PC-3 (cell line): ENCODE measurements at regions of chr7 and their contacts with region 1.

Region 1: DNA sequence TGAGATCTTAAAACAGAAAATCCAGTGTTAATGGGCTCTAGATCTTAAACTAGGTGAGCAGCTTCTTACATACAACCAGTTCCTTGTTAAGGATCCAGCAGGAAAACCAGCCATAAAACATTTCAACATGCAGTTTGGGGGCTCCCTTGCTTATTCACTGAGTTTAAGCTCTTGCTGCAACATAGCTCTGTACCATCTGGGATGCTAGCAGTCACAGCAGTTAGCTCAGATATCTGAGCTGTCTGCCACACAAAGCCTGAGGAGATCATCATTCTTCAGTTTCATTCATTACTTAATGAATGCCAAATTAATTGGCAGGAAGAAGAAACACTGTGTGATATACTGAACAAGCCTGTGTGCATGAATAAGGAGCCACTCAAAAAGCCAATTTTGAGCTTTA is 62.8 kb downstream of the PODXL start:
- DNase-seq: no peak
- ATAC-seq: no peak
- H3K4me3 ChIP-seq: no peak overlapping the region
- H3K27ac ChIP-seq: no peak overlapping the region
- H3K4me1 ChIP-seq: peaks cover 4% of the 10 kb centered on the region; the same call in 1 of the 2 replicates
- H3K27me3 ChIP-seq: no peaks in the 10 kb centered on the region
- CTCF ChIP-seq: no peak

Region 2: DNA sequence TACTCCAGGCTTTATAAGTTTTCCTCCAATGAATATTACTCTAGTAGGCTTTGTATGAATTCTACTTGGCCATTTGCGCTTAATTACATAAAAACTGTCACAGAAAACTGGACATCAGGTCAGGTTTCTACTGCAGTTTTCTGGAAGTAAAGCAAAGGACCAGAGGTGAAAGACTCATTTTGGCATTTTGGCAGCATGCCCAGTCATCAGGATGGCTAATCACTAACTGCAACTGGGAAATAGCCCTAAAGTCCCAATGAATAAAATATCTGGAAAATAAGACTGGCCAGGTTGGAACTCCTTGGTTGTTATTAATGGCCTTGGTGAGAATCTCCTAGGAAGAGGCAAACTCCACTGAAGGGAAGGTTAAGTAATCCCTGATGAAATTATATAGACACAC is 900.5 kb before region 1 on chr7:
- CTCF ChIA-PET with region 1: no interaction called
- POLR2A ChIA-PET with region 1: no interaction called
- intact Hi-C with region 1: no loop called
- DNase-seq: peak; percentile 4
- ATAC-seq: no peak
- H3K4me3 ChIP-seq: no peak overlapping the region
- H3K27ac ChIP-seq: no peak overlapping the region
- H3K4me1 ChIP-seq: no peaks in the 10 kb centered on the region
- H3K27me3 ChIP-seq: no peaks in the 10 kb centered on the region
- CTCF ChIP-seq: no peak

Region 3: DNA sequence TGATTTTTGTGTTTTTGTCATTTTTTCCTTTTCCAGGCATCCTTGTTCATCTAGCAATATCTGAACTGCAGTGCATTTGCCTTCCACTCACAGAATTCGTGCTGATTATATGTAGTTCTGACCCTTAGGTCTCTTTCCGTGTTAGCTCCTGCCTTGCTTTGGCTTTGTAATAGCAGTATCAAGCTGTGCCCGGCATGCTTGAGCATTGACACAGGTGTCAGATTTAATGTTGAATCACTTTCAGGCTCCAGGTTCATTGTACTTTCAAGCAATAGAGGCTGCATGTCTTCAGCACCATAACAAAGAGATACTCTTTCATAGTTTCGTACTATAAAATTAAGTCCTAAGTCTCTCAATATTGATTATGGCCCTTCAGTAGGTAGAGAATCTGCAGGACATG is 22.0 kb before region 1 on chr7:
- CTCF ChIA-PET with region 1: no interaction called
- POLR2A ChIA-PET with region 1: no interaction called
- intact Hi-C with region 1: no loop called
- DNase-seq: no peak
- ATAC-seq: no peak
- H3K4me3 ChIP-seq: no peak overlapping the region
- H3K27ac ChIP-seq: no peak overlapping the region
- H3K4me1 ChIP-seq: no peaks in the 10 kb centered on the region
- H3K27me3 ChIP-seq: no peaks in the 10 kb centered on the region
- CTCF ChIP-seq: no peak

Region 4: GRCh38 chr7:131546583-131547111 is 53.1 kb after region 1 on chr7:
- CTCF ChIA-PET with region 1: interaction called, 19 read pairs
- POLR2A ChIA-PET with region 1: no interaction called
- intact Hi-C with region 1: no loop called
- DNase-seq: peak; percentile 48
- ATAC-seq: no peak
- H3K4me3 ChIP-seq: no peak overlapping the region
- H3K27ac ChIP-seq: no peak overlapping the region
- H3K4me1 ChIP-seq: no peaks in the 10 kb centered on the region
- H3K27me3 ChIP-seq: no peaks in the 10 kb centered on the region
- CTCF ChIP-seq: peak; percentile 93